Activated CD4-positive, alpha-beta memory T cell treated with anti-CD3 and anti-CD28 coated beads, Interleukin-2, amount 10 ng/mL, durations not matched to agents 7 days and 5 days (primary cell): ENCODE measurements at regions of chr22 and their contacts with region 1.

Region 1: DNA sequence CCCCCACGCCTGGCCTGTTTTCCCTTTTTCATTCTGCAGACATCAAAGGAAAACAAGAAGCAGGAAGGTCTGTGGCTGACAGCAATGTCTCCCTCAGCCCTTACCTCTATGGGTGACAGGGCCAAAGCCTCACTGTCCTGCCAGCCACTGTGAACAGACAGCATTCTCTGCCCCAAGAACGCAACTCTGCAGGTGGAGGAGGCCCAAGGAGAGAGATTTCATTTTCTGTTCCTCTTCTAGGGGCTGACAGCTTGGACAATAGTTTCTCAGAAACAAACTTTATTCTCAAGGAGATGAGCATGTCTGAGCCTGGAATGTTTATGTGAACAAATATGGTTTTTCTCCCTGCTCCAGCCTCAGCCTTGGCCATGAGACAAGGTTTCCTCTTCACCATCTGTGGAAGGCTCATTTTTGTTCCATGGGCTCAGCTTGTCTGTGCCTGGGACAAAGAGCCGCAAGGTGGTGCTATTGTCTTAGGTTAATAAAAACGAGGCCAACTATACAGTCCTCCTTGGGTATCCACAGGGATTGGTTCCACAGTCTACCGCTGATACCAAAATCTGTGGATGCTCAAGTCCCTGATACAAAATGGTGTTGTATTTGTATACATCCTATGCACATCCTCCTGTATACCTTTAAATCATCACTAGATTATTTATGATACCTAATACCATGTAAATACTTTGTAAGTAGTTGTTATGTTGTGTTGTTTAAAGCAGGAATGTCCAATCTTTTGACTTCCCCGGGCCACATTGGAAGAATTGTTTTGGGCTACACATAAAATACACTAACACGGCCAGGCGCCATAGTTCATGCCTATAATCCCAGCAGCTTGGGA is 5.8 kb downstream of the PIWIL3 start:
- DNase-seq: peak; percentile 58
- H3K4me3 Mint-ChIP-seq: no peak overlapping the region
- H3K27ac Mint-ChIP-seq: no peak overlapping the region
- H3K4me1 Mint-ChIP-seq: peaks cover 5% of the 10 kb centered on the region
- H3K27me3 Mint-ChIP-seq: peaks cover 16% of the 10 kb centered on the region

Region 2: GRCh38 chr22:24707470-24707801 is 61.3 kb before region 1 on chr22:
- CTCF ChIA-PET with region 1: no interaction called
- POLR2A ChIA-PET with region 1: no interaction called
- DNase-seq: no peak
- H3K4me3 Mint-ChIP-seq: no peak overlapping the region
- H3K27ac Mint-ChIP-seq: no peak overlapping the region
- H3K4me1 Mint-ChIP-seq: no peaks in the 10 kb centered on the region
- H3K27me3 Mint-ChIP-seq: peaks cover 23% of the 10 kb centered on the region

Region 3: DNA sequence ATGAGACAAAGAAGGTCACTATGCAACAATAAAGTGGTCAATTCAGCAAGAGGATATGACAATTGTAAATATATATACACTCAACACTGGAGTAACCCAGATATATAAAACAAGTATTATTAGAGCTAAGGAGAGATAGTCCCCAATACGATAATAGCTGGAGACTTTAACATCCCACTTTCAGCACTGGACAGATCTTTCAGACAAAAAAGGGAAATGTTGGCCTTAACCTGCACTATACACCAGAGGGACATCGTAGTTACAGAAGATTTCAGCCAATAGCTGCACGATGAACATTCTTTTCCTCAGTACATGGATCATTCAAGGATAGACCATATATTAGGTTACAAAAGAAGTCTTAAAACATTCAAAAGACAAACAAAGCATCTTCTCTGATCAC is 24.1 kb before region 1 on chr22:
- CTCF ChIA-PET with region 1: no interaction called
- POLR2A ChIA-PET with region 1: no interaction called
- DNase-seq: no peak
- H3K4me3 Mint-ChIP-seq: no peak overlapping the region
- H3K27ac Mint-ChIP-seq: no peak overlapping the region
- H3K4me1 Mint-ChIP-seq: no peaks in the 10 kb centered on the region
- H3K27me3 Mint-ChIP-seq: peaks cover 67% of the 10 kb centered on the region

Region 4: DNA sequence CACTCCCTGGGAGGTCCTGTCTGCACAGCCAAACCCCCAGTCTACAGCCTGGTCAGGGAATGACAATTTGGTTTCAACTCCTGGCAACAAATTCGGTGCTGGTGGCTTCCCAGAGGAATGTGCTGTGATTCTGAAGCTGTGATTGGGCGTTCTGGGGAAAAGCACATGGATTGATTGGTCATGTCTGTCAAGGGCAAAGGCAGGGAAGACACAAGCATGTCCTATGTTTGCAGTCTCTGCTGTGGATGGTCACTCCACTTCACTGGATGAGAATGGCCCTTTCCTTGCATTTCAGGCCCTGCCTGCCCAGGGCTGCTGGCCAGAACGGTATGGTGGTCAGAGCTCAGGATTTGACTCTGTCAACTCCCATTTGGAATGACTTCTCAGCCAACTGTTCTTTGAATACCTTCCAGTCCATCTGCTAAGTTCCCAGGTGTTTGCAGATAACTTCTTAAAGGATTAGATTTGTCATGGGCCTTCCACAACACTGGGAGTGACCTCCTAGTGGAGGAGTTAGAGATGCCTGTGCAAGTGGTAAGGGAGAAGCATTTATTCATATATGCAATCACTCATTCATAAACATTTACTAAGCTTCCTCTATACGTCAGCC is 79.9 kb after region 1 on chr22:
- CTCF ChIA-PET with region 1: interaction called, 82 read pairs
- POLR2A ChIA-PET with region 1: no interaction called
- DNase-seq: no peak
- H3K4me3 Mint-ChIP-seq: no peak overlapping the region
- H3K27ac Mint-ChIP-seq: no peak overlapping the region
- H3K4me1 Mint-ChIP-seq: peaks cover 24% of the 10 kb centered on the region
- H3K27me3 Mint-ChIP-seq: no peaks in the 10 kb centered on the region